ENCODE measurements at regions of chr12 and their contacts with region 1.

Region 1: DNA sequence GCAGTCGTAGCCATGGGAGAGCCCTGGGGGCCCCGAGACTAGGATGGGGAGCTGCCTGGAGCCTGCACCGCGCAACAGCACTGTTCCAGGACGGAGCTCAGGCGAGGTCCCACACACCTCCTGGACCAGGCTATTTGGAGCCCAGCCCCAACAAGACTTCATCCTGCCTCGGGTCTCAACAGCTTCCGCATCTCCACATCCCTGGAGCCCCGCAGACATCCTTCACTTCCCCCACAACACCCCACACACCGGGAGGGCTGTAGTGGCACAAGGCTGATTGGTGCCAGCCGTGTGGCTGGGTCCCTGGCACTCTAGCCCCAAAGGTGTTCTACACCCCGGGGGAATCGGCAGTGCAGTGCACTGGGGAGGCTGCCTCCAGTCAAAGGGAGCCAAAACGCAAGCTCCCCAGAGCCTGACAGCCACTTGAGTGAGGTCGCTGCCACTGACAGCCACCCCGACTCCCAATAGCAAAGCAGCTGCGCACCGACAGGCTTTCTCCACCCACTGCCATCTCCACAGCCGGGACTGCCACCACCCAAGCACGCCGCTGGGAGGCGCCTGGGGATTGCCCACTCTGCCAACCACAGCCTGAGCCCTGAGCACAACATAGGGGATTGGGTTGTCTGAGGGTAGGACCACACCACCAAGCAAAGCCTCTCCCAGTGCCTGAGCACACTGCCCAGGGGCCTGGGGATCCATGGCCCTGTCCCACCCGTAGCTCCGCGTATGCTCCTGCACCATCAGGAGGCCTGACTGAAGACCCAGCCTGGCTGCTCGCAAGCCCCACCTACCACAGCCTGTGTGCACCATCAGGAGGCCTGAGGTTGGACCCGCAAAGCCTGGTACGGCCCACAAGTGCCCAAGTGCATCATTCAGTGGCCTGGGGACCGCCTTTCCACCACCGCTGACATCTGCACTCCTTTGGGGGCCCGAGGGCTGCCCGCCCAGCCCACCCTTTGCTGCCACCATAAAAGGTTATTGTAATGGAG is 13.2 kb upstream of the KLRF1 start:
- DNase-seq: no peak
- H3K4me3 ChIP-seq: peak overlapping the region; percentile 22
- H3K27me3 ChIP-seq: no peaks in the 10 kb centered on the region
- CTCF ChIP-seq: peak; percentile 91

Region 2: GRCh38 chr12:9227950-9228349 is 586.2 kb before region 1 on chr12:
- CTCF ChIA-PET with region 1: no interaction called
- POLR2A ChIA-PET with region 1: no interaction called
- DNase-seq: no peak
- H3K4me3 ChIP-seq: no peak overlapping the region
- H3K27me3 ChIP-seq: no peaks in the 10 kb centered on the region
- CTCF ChIP-seq: no peak

Region 3: GRCh38 chr12:9827209-9827888 is 13.2 kb after region 1 on chr12 and contains the start of gene KLRF1:
- CTCF ChIA-PET with region 1: interaction called, 19 read pairs
- POLR2A ChIA-PET with region 1: no interaction called
- DNase-seq: no peak
- H3K4me3 ChIP-seq: no peak within 1 kb of the TSS
- H3K27me3 ChIP-seq: no peaks in the 10 kb centered on the region
- CTCF ChIP-seq: no peak
- polyA plus RNA-seq, gene KLRF1: not detected in 2 replicates

Region 4: DNA sequence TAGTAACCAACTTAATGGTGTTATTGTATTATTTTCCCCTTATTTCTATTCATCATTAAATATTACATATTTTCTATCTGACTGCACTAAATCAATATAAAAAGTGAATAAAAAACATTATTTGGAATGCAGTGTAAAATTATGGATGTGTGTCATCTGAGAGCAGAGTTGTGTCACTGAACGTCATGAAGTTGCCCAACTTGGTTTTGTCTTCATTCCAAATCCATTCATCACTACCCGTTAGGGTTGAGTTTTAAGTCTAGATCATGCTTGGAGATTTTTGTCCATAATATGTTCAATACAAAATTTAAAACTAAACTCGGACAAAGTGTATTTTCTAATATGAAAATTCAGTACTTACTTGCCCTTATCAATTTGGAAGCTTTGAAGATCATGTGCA is 29.3 kb after region 1 on chr12:
- CTCF ChIA-PET with region 1: interaction called, 11 read pairs
- POLR2A ChIA-PET with region 1: no interaction called
- DNase-seq: no peak
- H3K4me3 ChIP-seq: no peak overlapping the region
- H3K27me3 ChIP-seq: no peaks in the 10 kb centered on the region
- CTCF ChIP-seq: no peak

Region 5: DNA sequence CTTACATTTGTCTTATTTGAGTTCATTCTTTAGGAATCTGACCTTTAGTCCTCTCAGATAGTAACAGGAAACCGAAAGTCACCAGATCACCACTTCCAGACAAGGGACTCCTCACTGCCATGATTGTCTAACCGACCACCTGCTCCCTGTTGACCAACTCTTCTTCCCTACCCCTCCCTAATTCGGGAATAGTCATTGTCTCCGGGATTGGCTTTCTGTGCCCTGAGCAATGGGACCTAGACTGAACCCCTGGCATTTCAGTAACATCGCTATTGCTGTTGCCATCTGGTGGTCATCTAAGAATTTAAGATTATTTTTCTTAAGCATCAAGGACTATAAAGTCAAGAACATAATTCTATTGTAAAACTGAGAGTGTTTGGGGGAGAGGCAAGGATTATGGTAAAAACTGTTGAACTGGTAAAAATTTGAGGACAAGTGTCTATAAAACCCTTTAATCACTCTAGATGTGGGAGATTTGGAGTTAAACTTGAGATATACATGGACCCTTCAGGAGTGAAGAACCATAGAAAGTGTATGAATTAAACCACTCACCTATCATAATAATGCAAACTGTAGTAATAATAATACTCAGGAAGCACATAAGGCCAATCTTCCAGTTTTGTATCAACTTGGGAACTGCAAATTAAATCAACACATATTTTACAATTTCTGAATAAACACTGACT is 111.7 kb after region 1 on chr12:
- CTCF ChIA-PET with region 1: interaction called, 26 read pairs
- POLR2A ChIA-PET with region 1: no interaction called
- DNase-seq: no peak
- H3K4me3 ChIP-seq: no peak overlapping the region
- H3K27me3 ChIP-seq: no peaks in the 10 kb centered on the region
- CTCF ChIP-seq: peak; percentile 64

Measured in BJ (cell line).